Heart left ventricle (tissue), 16 donors: ENCODE measurements at regions of chr22 and their contacts with region 1.

Region 1: DNA sequence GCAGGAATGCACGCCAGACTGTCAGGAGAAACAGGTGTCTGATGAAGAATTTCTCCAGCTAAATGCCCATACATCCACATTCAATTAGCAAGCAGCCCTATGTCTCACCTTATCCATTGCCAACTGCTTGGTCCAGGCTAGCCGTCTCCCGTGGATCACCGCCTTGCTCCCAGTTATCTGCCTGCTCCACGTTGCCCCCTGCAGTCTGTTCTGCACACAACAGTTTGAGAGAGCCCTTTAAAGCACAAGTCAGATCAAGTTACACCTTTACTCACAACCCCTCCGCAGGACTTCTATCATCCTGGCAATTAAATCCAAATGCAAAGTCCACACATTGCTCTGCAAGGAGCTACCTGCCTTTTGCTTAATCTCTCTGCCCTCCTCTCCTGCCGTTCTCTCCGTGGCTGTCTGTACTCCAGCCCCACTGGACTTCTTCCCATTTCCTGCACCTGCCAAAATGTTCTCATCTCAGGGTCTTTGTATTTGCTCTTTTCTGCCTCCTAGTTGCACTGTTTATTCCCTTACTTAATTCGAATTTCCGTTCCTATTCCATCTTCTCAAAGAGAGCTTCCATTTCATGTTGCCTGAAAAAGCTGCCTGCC is 185.3 kb upstream of the LARGE1 start:
- DNase-seq: peak in 4 of 5 donors; percentile 31 to 62 (median 51)
- ATAC-seq: peak in 3 of 4 donors; percentile 72 to 82 (median 78)
- H3K4me3 ChIP-seq: no peak overlapping the region
- H3K27ac ChIP-seq: no peak overlapping the region
- H3K4me1 ChIP-seq: no peaks in the 10 kb centered on the region
- H3K27me3 ChIP-seq: peaks cover 0 to 11% (median 0%) of the 10 kb centered on the region in 9 donors
- CTCF ChIP-seq: peak; percentile 50 to 77 (median 68)
- POLR2A ChIP-seq: no peak

Region 2: DNA sequence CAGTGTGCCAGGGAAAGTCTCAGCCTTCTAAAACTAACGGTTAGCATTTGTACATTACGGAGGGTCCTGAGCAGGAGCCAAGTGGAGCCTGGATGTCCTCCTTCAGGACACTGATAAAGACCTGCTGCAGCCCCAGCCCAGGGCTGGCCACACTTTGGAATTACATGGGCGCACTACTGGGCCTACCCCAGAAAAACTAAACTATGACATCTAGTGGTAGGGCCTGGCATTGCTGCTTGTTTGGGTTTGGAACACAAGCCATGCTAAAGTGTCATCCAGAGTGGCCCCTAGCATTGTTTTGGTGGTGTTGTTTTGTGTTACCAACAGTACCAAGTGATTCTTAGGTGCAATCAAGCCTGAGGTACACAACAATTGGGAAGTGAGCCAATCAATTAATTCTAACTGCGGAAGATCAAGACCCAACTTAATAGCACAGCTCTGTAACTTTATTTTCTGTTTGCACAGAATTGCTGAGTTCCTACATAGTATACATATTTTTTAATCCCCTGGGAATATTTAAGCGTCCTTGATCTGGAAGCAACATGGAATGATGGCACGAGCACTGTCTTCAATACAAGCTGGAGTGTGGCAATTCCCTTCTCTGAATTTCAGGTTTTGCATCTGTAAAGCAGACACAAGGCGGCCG is 526.0 kb before region 1 on chr22:
- intact Hi-C with region 1: loop called in 1 of 10 experiments (anchors 10 kb)
- DNase-seq: peak in 4 of 5 donors; percentile 65 to 70 (median 69)
- ATAC-seq: peak; percentile 88 to 92 (median 90)
- H3K4me3 ChIP-seq: no peak overlapping the region
- H3K27ac ChIP-seq: peak overlapping the region in 2 of 12 donors; percentile 13 to 37
- H3K4me1 ChIP-seq: peaks cover 0 to 34% (median 14%) of the 10 kb centered on the region in 12 donors
- H3K27me3 ChIP-seq: no peaks in the 10 kb centered on the region
- CTCF ChIP-seq: peak; percentile 77 to 98 (median 92)
- POLR2A ChIP-seq: no peak

Region 3: GRCh38 chr22:33737662-33738061 is 367.9 kb before region 1 on chr22:
- intact Hi-C with region 1: loop called in 1 of 10 experiments (anchors 10 kb)
- DNase-seq: no peak
- ATAC-seq: peak; percentile 54 to 80 (median 60)
- H3K4me3 ChIP-seq: no peak overlapping the region
- H3K27ac ChIP-seq: peak overlapping the region in 5 of 12 donors; percentile 6 to 56 (median 22)
- H3K4me1 ChIP-seq: peaks cover 0 to 41% (median 0%) of the 10 kb centered on the region in 12 donors
- H3K27me3 ChIP-seq: no peaks in the 10 kb centered on the region
- CTCF ChIP-seq: no peak
- POLR2A ChIP-seq: no peak